ENCODE measurements at regions of chr10 and their contacts with region 1.

Region 1: DNA sequence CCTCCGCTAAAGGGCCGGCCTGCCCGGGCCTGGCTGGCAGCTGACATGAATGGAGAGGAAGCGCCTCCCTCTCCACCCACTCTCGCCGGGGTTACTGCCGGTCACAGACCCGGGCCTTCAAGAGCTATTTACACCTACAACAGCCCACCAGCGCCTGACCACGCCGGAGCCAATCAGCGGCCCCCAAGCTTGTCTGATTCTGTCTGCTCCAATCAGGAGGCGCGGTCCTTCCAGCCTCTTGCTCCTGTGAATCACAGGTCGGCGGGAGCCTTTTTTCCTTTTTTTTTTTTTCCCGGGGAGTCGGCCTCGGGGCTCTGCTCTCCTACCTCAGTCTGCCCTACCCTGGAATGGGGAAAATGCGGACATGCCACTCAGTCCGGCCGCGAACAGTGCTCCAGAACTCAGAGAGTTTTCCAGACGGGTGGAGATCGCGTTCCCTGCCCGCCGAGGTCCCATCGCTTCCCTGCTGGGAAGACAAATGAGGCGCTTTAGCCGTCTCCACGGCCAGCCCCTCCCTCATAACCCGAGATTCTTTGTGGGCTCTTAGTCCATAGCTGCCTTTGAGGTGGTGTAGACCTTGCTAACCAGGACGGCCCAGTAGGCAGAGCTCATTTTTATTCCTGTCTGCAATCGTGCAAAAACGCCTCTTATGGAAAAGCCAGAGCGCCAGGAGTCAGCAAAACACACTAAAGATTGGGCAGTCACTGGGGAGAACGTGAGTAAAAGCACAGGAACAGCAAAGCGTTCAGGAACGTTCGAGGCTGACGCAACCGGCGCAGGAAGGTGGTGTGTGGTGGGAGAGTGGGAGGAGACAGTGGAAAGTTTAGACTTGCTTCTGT is 26.5 kb downstream of the SCD start:
- DNase-seq: peak; percentile 96
- H3K4me3 Mint-ChIP-seq: no peak overlapping the region
- H3K27ac Mint-ChIP-seq: no peak overlapping the region
- H3K4me1 Mint-ChIP-seq: peaks cover 39% of the 10 kb centered on the region
- H3K27me3 Mint-ChIP-seq: no peaks in the 10 kb centered on the region

Region 2: GRCh38 chr10:100185364-100186252 is 187.9 kb before region 1 on chr10 and contains the start of gene ERLIN1:
- intact Hi-C with region 1: loop called (anchors 2 kb)
- DNase-seq: peak; percentile 98
- H3K4me3 Mint-ChIP-seq: peak within 1 kb of the TSS; percentile 95
- H3K27ac Mint-ChIP-seq: peak within 1 kb of the TSS; percentile 97
- H3K4me1 Mint-ChIP-seq: peaks cover 41% of the 10 kb centered on the region
- H3K27me3 Mint-ChIP-seq: no peaks in the 10 kb centered on the region
- total RNA-seq, gene ERLIN1: 20.2 TPM in 2 replicates

Region 3: GRCh38 chr10:100286051-100287033 is 87.2 kb before region 1 on chr10 and contains the start of gene BLOC1S2:
- intact Hi-C with region 1: loop called (anchors 1 kb)
- DNase-seq: peak; percentile 98
- H3K4me3 Mint-ChIP-seq: peak within 1 kb of the TSS; percentile 97
- H3K27ac Mint-ChIP-seq: peak within 1 kb of the TSS; percentile 98
- H3K4me1 Mint-ChIP-seq: peaks cover 18% of the 10 kb centered on the region
- H3K27me3 Mint-ChIP-seq: peaks cover under 1% of the 10 kb centered on the region
- total RNA-seq, gene BLOC1S2: 62.0 and 62.5 TPM in 2 replicates

Region 4: DNA sequence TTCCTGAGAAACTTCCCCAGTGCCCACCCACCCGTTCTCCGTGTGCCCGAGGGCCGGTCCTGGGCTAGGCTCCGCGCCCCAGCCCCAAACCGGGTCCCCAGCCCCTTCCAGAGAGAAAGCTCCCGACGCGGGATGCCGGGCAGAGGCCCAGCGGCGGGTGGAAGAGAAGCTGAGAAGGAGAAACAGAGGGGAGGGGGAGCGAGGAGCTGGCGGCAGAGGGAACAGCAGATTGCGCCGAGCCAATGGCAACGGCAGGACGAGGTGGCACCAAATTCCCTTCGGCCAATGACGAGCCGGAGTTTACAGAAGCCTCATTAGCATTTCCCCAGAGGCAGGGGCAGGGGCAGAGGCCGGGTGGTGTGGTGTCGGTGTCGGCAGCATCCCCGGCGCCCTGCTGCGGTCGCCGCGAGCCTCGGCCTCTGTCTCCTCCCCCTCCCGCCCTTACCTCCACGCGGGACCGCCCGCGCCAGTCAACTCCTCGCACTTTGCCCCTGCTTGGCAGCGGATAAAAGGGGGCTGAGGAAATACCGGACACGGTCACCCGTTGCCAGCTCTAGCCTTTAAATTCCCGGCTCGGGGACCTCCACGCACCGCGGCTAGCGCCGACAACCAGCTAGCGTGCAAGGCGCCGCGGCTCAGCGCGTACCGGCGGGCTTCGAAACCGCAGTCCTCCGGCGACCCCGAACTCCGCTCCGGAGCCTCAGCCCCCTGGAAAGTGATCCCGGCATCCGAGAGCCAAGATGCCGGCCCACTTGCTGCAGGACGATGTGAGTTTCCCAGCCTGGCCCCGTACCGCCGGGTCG is 26.6 kb before region 1 on chr10 and contains the start of gene SCD:
- intact Hi-C with region 1: loop called (anchors 1 kb)
- DNase-seq: peak; percentile 97
- H3K4me3 Mint-ChIP-seq: peak within 1 kb of the TSS; percentile 97
- H3K27ac Mint-ChIP-seq: peak within 1 kb of the TSS; percentile 94
- H3K4me1 Mint-ChIP-seq: peaks cover 58% of the 10 kb centered on the region
- H3K27me3 Mint-ChIP-seq: no peaks in the 10 kb centered on the region
- total RNA-seq, gene SCD: 252 and 256 TPM in 2 replicates

Region 5: DNA sequence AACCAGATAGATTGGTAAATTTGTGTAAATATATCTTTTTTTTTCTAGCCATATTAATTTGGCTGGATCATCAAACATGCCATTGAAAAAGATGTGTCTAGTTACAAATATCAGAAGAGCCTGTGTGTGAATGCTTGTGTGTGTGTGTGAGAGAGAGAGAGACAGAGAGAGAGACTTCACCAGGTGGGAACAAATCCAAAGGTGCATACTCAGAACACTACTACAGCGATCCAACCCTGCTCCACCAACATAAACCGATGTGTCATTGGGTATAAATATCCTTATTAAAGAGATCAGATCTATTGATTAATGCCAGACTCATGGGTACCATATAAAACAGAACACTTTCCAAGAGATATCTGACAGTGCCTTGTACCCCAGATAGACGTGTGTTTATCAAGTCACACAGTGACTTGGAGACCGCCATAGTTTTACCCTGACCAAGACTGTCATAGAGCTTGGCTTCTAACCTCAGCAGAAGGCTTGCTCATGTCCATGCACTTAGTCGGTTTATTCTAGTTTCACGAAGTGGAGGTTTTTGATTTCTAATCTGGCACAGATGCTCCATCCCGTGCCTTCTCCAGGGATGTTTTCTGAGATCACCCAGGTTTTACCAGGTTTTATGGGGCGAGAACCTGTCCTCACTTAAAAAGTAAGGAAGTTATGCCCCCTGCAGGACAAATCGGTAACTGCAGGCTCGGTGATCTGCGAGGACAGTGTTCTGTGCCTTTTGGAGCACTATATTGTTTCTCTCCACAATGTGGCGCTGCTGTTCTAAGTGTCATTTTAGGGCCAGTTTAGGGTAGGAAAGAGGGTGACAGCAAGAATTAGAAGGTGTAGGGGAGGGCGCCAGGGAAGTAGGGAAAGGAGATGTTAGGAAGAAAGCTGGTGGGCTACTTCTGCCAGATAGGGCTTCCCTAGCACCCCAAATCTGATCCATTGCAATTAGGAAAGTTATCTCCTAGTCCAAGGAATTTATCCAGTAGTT is 60.0 kb after region 1 on chr10:
- intact Hi-C with region 1: loop called (anchors 1 kb)
- DNase-seq: peak; percentile 99
- H3K4me3 Mint-ChIP-seq: no peak overlapping the region
- H3K27ac Mint-ChIP-seq: peak overlapping the region; percentile 17
- H3K4me1 Mint-ChIP-seq: peaks cover 12% of the 10 kb centered on the region
- H3K27me3 Mint-ChIP-seq: no peaks in the 10 kb centered on the region

Region 6: DNA sequence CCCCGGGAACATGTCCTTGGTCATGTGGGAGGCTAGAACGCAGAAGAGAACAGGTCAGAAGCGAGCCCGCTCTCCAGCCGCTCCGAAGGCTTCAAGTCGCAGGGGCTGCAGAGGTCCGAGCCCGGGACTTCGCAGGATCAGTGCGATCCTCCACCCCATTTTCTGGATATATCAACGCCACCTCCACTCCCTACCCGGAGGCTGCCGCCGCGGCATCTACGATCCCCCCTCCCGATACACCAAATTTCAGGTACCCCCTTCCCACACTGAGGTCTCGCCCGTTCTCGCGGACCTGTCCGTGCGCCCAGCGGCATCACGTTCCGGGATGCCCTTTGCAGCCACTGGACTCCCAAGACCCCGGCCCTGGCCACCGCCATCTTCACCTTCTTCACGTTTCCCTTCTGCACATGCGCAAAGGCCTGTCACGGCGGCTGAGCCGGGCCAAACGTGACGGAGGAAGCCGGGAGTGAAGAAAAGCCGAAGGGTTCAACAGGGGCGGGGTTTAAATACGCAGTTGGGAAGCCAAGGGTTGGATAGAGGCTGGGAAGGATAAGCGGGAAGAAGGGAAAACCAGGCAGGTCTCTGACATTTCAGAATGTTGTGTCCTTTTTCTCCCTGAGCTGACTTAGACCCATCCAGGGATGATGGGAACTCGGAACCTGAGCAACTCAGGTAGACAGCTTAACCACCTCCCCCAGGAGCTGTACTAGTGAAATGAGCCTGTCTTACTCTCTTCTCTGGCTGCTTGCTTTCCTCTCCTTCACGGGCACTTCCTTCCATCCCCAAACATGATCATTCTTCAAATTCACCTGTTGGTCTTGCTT is 156.2 kb after region 1 on chr10 and contains the start of gene NDUFB8:
- intact Hi-C with region 1: loop called (anchors 5 kb)
- DNase-seq: peak; percentile 97
- H3K4me3 Mint-ChIP-seq: peak within 1 kb of the TSS; percentile 87
- H3K27ac Mint-ChIP-seq: peak within 1 kb of the TSS; percentile 91
- H3K4me1 Mint-ChIP-seq: peaks cover 28% of the 10 kb centered on the region
- H3K27me3 Mint-ChIP-seq: no peaks in the 10 kb centered on the region
- total RNA-seq, gene NDUFB8: 323 TPM in 2 replicates

Measured in activated CD4-positive, alpha-beta T cell treated with anti-CD3 and anti-CD28 coated beads, Interleukin-2, amount 10 ng/mL, durations not matched to agents 24 days and 14 days (primary cell).